Gastrocnemius medialis (tissue), 4 donors: ENCODE measurements at regions of chr17 and their contacts with region 1.

Region 1: DNA sequence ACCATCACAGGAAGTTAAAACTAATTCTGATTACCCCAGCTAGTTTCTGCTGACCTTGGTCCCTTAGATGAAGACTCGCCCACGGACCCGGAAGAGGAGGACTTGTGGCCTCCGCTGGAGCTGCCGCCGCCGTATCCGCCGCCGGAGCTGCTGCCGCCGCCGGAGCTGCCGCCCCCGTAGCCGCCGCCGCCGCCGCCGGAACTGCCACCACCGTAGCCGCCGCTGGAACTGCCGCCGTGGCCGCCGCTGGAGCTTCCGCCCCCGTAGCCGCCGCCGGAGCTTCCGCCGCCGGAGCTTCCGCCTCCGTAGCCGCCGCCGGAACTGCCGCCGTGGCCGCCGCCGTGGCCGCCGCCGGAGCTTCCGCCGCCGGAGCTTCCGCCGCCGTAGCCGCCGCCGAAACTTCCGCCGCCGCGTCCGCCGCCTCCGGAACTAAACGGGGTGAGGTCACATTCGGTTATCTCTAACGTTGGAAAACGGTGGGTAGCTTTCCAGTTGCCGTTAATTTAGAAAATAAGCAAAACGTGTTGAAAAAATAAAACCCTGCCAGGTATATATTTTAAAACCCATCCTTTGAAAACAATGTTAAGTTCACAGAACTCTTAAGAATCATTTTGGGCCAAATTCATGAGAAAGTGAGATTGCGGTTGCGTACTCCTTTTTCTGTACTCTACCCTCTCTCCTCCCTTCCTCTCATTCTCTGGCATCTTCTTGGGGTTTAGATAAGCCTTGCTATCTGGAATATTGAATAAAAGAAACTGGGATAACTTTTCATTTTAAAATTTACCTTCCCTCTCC is 3.5 kb downstream of the KRT10 start:
- DNase-seq: peak; percentile 59 to 71
- ATAC-seq: peak; percentile 91 to 95
- H3K4me3 ChIP-seq: peak overlapping the region; percentile 58 to 73 (median 69)
- H3K27ac ChIP-seq: peak overlapping the region; percentile 79 to 87 (median 83)
- H3K4me1 ChIP-seq: peaks cover 14 to 22% of the 10 kb centered on the region in 2 donors
- H3K27me3 ChIP-seq: no peaks in the 10 kb centered on the region
- CTCF ChIP-seq: no peak
- POLR2A ChIP-seq: peak; percentile 47 to 68

Region 2: GRCh38 chr17:40647624-40648383 is 171.1 kb before region 1 on chr17 and contains the start of gene SMARCE1:
- in situ Hi-C with region 1: no loop called
- intact Hi-C with region 1: loop called (anchors 10 kb)
- DNase-seq: peak; percentile 19 to 41
- ATAC-seq: peak; percentile 78 to 84
- H3K4me3 ChIP-seq: peak within 1 kb of the TSS; percentile 75 to 98 (median 82)
- H3K27ac ChIP-seq: peak within 1 kb of the TSS; percentile 95 to 99 (median 97)
- H3K4me1 ChIP-seq: peaks cover 28 to 35% of the 10 kb centered on the region in 2 donors
- H3K27me3 ChIP-seq: no peaks in the 10 kb centered on the region
- CTCF ChIP-seq: no peak
- POLR2A ChIP-seq: peak; percentile 24 to 44
- total RNA-seq, gene SMARCE1: 48.0 to 74.7 (median 64.5) TPM

Region 3: GRCh38 chr17:40763752-40764151 is 55.2 kb before region 1 on chr17:
- in situ Hi-C with region 1: no loop called
- intact Hi-C with region 1: no loop called
- DNase-seq: no peak
- ATAC-seq: no peak
- H3K4me3 ChIP-seq: no peak overlapping the region
- H3K27ac ChIP-seq: no peak overlapping the region
- H3K4me1 ChIP-seq: no peaks in the 10 kb centered on the region
- H3K27me3 ChIP-seq: peaks cover 0 to 5% (median 0%) of the 10 kb centered on the region in 3 donors
- CTCF ChIP-seq: no peak
- POLR2A ChIP-seq: no peak

Region 4: GRCh38 chr17:41167561-41167960 is 348.6 kb after region 1 on chr17:
- in situ Hi-C with region 1: no loop called
- intact Hi-C with region 1: no loop called
- DNase-seq: no peak
- ATAC-seq: no peak
- H3K4me3 ChIP-seq: no peak overlapping the region
- H3K27ac ChIP-seq: no peak overlapping the region
- H3K4me1 ChIP-seq: no peaks in the 10 kb centered on the region
- H3K27me3 ChIP-seq: no peaks in the 10 kb centered on the region
- CTCF ChIP-seq: no peak
- POLR2A ChIP-seq: no peak

Region 5: DNA sequence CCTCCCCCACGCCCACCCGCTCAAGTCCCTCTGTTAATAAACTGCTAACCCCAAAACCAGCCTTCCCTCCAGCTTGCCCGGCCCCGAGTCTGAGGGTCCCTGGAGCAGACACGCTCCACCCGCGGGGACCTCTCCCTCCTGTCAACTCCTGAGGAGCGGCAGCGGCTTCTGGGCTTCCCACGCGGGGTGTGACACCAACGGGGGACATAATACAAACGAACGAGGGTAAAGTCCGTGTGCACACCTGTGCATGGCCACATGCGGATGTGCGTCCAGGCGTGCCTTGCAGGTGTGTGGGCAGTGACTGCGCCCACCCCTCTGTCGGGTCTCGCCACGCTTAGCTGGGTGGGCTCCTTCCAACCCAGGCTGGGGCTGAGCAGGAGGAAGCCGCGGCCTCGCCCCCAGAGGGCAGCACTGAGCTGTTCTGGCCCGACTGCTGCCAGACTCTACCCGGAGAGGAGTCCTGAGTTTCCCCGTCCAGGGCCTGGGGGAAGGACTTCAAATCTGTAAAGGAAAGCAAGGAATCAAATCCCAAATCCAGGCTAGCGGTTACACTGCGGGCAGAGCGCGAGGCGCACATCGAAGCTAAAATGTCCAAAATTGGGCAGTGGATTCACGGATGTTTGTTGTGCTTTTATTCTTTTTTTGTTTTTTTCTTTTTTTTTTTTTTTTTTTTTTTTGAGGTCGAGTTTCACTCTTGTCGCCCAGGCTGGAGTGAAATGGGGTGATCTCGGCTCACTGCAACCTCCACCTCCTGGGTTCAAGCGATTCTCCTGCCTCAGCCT is 829.7 kb after region 1 on chr17:
- in situ Hi-C with region 1: loop called in 1 of 4 experiments (anchors 25 kb)
- intact Hi-C with region 1: loop called (anchors 2 kb)
- DNase-seq: peak; percentile 57 to 79
- ATAC-seq: peak; percentile 95 to 96
- H3K4me3 ChIP-seq: peak overlapping the region; percentile 43 to 52 (median 46)
- H3K27ac ChIP-seq: peak overlapping the region in 1 of 4 donors; percentile 30
- H3K4me1 ChIP-seq: peaks cover 7 to 16% of the 10 kb centered on the region in 2 donors
- H3K27me3 ChIP-seq: no peaks in the 10 kb centered on the region
- CTCF ChIP-seq: peak; percentile 82 to 95 (median 91)
- POLR2A ChIP-seq: no peak

Region 6: GRCh38 chr17:41678907-41679739 is 860.2 kb after region 1 on chr17:
- in situ Hi-C with region 1: loop called in 2 of 4 experiments (anchors 10 to 25 kb)
- intact Hi-C with region 1: no loop called
- DNase-seq: no peak
- ATAC-seq: peak; percentile 52 to 83
- H3K4me3 ChIP-seq: peak overlapping the region in 2 of 4 donors; percentile 6 to 29
- H3K27ac ChIP-seq: peak overlapping the region; percentile 45 to 71 (median 54)
- H3K4me1 ChIP-seq: no peaks in the 10 kb centered on the region
- H3K27me3 ChIP-seq: peaks cover 0 to 4% (median 0%) of the 10 kb centered on the region in 3 donors
- CTCF ChIP-seq: no peak
- POLR2A ChIP-seq: peak in 1 of 2 donors; percentile 35

Region 7: GRCh38 chr17:41688699-41689496 is 870.0 kb after region 1 on chr17 and contains the start of gene EIF1:
- in situ Hi-C with region 1: no loop called
- intact Hi-C with region 1: loop called (anchors 5 kb)
- DNase-seq: peak; percentile 100
- ATAC-seq: peak; percentile 85 to 87
- H3K4me3 ChIP-seq: peak within 1 kb of the TSS; percentile 94 to 100 (median 96)
- H3K27ac ChIP-seq: peak within 1 kb of the TSS; percentile 99 to 100 (median 100)
- H3K4me1 ChIP-seq: peaks cover 28 to 30% of the 10 kb centered on the region in 2 donors
- H3K27me3 ChIP-seq: no peaks in the 10 kb centered on the region
- CTCF ChIP-seq: no peak
- POLR2A ChIP-seq: peak; percentile 100
- total RNA-seq, gene EIF1: 222 to 842 (median 375) TPM